ENCODE measurements at regions of chr2 and their contacts with region 1.

Region 1: DNA sequence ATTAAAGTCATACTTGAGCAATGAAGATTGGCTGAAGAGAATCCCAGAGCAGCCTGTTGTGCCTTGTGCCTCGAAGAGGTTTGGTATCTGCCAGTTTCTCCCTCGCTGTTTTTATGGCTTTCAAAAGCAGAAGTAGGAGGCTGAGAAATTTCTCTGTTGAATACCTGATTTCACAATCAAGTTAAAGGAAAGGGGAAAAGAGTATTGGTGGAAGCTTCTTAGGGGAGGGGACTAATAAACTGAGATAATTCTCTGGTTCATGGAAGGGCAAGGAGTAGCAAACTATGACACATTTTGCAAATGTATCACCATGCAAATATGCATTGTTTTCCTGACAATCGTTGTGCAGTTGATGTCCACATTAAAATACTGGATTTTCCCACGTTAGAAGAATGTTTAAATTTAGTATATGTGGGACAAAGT is at the start of gene IL1B:
- H3K4me3 Mint-ChIP-seq: no peak within 1 kb of the TSS
- H3K27ac Mint-ChIP-seq: peak within 1 kb of the TSS; percentile 58
- H3K4me1 Mint-ChIP-seq: peaks cover 92% of the 10 kb centered on the region
- H3K27me3 Mint-ChIP-seq: peaks cover 5% of the 10 kb centered on the region

Region 2: DNA sequence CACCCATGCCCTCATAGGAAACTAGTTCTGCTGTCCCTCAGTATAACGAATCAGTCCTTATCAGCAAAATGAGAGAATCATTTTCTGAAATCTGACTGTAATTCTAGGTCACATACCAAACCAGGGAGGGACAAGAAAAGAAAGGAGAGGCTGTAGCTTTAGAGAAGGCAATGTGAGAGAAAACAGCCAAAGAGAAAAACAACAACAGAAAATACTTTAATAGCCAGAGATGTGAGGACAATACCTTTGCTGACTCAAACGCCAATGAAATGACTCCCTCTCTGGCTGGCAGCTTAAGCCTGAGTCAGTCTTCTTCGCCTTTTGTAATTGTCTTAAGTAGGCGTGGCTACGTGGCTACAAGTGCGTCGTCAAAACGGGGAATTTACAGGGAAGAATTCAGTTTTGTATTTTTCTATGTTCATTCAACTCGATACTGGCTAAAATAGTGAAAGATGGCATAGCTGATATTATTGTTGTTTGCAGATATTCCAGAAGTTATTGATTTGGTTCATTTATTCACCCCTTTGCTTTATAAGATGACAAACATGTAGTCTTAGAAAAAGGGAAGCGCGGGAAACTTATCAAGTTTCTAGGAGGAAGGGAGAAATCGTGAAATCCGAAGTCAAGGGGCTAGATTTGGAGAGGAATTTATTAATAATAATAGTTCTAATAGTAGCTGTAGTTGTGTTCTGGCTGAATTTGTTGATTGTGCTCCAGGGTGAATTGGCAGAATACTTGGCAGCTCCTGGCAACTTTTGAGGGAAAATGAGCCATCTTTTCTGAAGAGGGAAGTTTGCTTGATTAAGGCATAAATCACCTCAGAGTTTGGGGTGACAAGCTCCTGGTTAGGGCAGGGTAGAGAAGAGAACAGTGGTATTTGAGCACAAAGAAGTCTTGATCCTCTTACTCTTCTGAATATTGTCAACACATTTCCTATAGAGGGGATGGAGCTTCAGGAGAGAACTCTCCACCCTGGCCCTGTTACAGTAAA is 52.2 kb before region 1 on chr2 and contains the start of gene IL1A:
- intact Hi-C with region 1: loop called (anchors 5 kb)
- H3K4me3 Mint-ChIP-seq: peak within 1 kb of the TSS; percentile 58
- H3K27ac Mint-ChIP-seq: peak within 1 kb of the TSS; percentile 73
- H3K4me1 Mint-ChIP-seq: peaks cover 60% of the 10 kb centered on the region
- H3K27me3 Mint-ChIP-seq: no peaks in the 10 kb centered on the region

Region 3: DNA sequence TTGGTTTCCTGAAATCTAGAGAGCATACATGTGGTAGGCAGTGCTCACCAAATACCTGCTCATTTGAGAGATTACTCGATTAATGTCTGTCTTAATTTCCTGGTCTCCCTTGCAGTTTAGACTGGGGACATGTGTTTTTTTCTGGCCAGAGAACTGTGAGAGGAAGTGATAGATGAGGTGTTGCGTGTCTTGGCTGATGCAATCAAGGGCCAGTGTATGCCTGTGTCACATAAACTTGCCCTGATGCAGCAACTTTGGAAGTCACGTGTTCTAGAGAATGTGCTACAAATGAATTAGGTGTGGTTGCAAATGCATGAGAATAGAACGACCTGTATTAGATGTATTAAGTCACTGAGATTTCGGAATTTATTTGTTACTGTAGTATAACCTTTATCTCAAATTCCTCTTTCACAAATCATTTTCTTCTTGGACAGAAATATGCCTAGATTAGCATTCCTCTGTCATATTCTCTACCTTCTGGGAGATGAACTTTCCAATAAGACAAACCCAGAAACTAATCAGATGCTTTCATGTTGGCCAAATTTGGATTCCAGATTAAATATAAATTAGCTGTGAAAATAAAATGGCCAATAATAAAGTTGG is 42.5 kb before region 1 on chr2:
- intact Hi-C with region 1: loop called (anchors 2 kb)
- H3K4me3 Mint-ChIP-seq: no peak overlapping the region
- H3K27ac Mint-ChIP-seq: peak overlapping the region; percentile 70
- H3K4me1 Mint-ChIP-seq: peaks cover 60% of the 10 kb centered on the region
- H3K27me3 Mint-ChIP-seq: no peaks in the 10 kb centered on the region

Measured in dendritic cell treated with granulocyte-macrophage colony-stimulating factor and Interleukin-4, amounts not matched to agents 40 ng/mL and 50 ng/mL, for 4 days (primary cell).